Aorta (tissue), 5 donors: ENCODE measurements at regions of chr1 and their contacts with region 1.

Region 1: GRCh38 chr1:43227143-43227764 is 42.5 kb upstream of the TMEM125 start:
- DNase-seq: peak; percentile 88 to 94
- ATAC-seq: peak; percentile 86
- H3K4me3 ChIP-seq: no peak overlapping the region
- H3K27ac ChIP-seq: no peak overlapping the region
- H3K4me1 ChIP-seq: no peaks in the 10 kb centered on the region
- H3K27me3 ChIP-seq: no peaks in the 10 kb centered on the region

Region 2: GRCh38 chr1:43414634-43415223 is 187.5 kb after region 1 on chr1:
- intact Hi-C with region 1: loop called (anchors 2 kb)
- DNase-seq: peak in 1 of 2 donors; percentile 70
- ATAC-seq: peak; percentile 79
- H3K4me3 ChIP-seq: no peak overlapping the region
- H3K27ac ChIP-seq: no peak overlapping the region
- H3K4me1 ChIP-seq: no peaks in the 10 kb centered on the region
- H3K27me3 ChIP-seq: no peaks in the 10 kb centered on the region

Region 3: DNA sequence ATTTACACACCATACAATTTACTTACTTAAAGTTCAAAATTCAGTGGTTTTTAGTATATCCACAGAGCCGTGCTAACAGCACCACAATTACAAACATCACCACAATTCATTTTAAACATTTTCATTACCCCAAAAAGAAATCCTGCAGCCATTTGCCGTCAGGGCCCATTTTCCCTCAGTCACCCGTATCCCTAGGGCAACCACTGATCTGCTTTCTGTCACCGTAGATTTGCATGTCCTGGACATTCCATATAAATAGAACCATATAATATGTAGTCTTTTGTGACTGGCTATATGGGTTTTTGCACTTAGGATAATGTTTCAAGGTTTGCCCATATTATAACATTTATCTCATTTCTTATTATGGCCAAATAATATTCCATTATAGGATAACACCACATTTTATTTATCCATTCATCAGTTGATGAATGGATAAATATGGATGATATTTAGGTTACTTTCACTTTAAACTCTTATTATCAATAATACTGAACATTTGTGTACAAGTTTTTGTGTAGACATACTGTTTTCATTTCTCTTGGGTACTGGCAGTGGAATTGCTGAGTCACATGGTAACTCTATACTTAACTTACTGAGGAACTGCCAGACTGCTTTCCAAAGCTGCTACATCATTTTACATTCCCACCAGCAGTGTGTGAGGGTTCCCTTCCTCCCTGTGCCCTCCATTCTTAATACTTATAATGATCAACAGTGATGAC is 548.9 kb after region 1 on chr1:
- intact Hi-C with region 1: no loop called
- DNase-seq: no peak
- ATAC-seq: no peak
- H3K4me3 ChIP-seq: no peak overlapping the region
- H3K27ac ChIP-seq: no peak overlapping the region
- H3K4me1 ChIP-seq: no peaks in the 10 kb centered on the region
- H3K27me3 ChIP-seq: no peaks in the 10 kb centered on the region